Aorta (tissue), 5 donors: ENCODE measurements at regions of chr12 and their contacts with region 1.

Region 1: GRCh38 chr12:71014180-71014785 is 93.7 kb upstream of the PTPRR start:
- DNase-seq: no peak
- ATAC-seq: no peak
- H3K4me3 ChIP-seq: no peak overlapping the region
- H3K27ac ChIP-seq: no peak overlapping the region
- H3K4me1 ChIP-seq: no peaks in the 10 kb centered on the region
- H3K27me3 ChIP-seq: no peaks in the 10 kb centered on the region

Region 2: DNA sequence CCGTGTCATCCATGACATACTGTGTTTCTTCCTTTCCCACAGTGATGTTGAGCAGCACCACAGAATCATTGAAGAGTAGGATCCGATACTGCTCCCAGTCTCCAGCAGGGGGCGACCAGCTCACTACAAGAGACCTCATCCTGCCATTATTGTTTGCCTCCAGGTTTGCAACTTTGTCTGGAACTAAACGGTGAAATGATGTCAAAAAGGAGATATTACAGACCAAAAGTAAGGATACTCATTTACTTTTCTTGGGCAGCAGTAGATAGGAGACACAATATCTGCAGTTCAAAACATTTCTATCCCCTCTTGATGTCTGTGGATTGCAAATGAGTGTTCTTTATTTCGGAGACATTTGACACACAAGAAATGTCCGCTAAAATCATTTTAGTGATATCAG is 424.2 kb before region 1 on chr12:
- intact Hi-C with region 1: loop called in 1 of 2 experiments (anchors 10 kb)
- DNase-seq: peak; percentile 73 to 89
- ATAC-seq: peak; percentile 87
- H3K4me3 ChIP-seq: no peak overlapping the region
- H3K27ac ChIP-seq: no peak overlapping the region
- H3K4me1 ChIP-seq: no peaks in the 10 kb centered on the region
- H3K27me3 ChIP-seq: no peaks in the 10 kb centered on the region

Region 3: GRCh38 chr12:70733385-70733784 is 280.9 kb before region 1 on chr12:
- intact Hi-C with region 1: loop called (anchors 2 to 5 kb)
- DNase-seq: no peak
- ATAC-seq: peak; percentile 85
- H3K4me3 ChIP-seq: no peak overlapping the region
- H3K27ac ChIP-seq: no peak overlapping the region
- H3K4me1 ChIP-seq: no peaks in the 10 kb centered on the region
- H3K27me3 ChIP-seq: no peaks in the 10 kb centered on the region

Region 4: DNA sequence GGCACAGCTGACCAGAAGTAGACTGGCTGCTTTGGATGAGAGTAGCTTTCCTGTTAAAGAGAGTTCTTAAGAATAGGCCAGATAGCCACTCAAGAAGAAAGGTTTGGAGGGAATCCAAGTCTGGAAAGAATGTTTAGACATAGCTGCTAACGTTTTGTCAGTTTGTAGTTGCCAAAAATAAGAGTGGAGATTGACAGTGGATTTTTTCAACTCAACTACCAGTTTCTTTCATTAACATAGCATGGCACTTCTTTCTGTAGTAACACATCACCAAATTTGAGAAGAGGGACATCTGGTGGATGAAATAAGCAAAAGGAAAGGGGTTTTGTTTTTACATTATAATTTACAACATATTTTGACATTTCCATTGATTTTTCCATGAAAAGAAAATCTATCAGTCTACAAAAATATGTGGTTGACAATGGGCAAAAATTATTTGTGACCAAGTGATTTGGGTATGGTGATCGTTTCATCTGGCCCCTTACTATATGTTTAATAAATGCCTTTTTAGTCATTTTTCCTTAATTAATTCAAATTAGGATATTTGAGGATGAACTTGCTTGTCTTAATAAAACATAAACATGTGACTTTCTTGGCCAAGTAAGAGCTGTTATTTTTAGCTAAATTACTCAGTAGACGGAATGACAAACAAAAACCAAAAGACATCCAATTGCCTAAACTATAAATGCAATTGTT is 164.9 kb before region 1 on chr12:
- intact Hi-C with region 1: loop called in 1 of 2 experiments (anchors 10 kb)
- DNase-seq: no peak
- ATAC-seq: no peak
- H3K4me3 ChIP-seq: no peak overlapping the region
- H3K27ac ChIP-seq: no peak overlapping the region
- H3K4me1 ChIP-seq: peaks cover 0 to 12% of the 10 kb centered on the region in 2 donors
- H3K27me3 ChIP-seq: no peaks in the 10 kb centered on the region

Region 5: GRCh38 chr12:70854881-70855568 is 159.3 kb before region 1 on chr12:
- intact Hi-C with region 1: loop called (anchors 5 to 10 kb)
- DNase-seq: no peak
- ATAC-seq: no peak
- H3K4me3 ChIP-seq: peak overlapping the region in 1 of 2 donors; percentile 18
- H3K27ac ChIP-seq: peak overlapping the region; percentile 28 to 82
- H3K4me1 ChIP-seq: peaks cover 3 to 15% of the 10 kb centered on the region in 2 donors
- H3K27me3 ChIP-seq: no peaks in the 10 kb centered on the region